Activated T-helper 1 cell treated with anti-CD3 and anti-CD28 coated beads, Interleukin-12 subunit alpha, Interleukin-12 subunit beta, Interleukin-2, Interleukin-4 antibody, amounts not matched to agents 30 ng/mL and 10 ng/mL and 1 ng/mL, durations not matched to agents 14 hours and 24 hours and 36 hours (primary cell): ENCODE measurements at regions of chr17 and their contacts with region 1.

Region 1: GRCh38 chr17:752002-752619 is at the start of gene GEMIN4:
- DNase-seq: peak; percentile 98
- H3K4me3 Mint-ChIP-seq: peak within 1 kb of the TSS; percentile 97
- H3K27ac Mint-ChIP-seq: peak within 1 kb of the TSS; percentile 95
- H3K4me1 Mint-ChIP-seq: peaks cover 34% of the 10 kb centered on the region
- H3K27me3 Mint-ChIP-seq: no peaks in the 10 kb centered on the region
- total RNA-seq, gene GEMIN4: 64.6 and 68.6 TPM in 2 replicates

Region 2: DNA sequence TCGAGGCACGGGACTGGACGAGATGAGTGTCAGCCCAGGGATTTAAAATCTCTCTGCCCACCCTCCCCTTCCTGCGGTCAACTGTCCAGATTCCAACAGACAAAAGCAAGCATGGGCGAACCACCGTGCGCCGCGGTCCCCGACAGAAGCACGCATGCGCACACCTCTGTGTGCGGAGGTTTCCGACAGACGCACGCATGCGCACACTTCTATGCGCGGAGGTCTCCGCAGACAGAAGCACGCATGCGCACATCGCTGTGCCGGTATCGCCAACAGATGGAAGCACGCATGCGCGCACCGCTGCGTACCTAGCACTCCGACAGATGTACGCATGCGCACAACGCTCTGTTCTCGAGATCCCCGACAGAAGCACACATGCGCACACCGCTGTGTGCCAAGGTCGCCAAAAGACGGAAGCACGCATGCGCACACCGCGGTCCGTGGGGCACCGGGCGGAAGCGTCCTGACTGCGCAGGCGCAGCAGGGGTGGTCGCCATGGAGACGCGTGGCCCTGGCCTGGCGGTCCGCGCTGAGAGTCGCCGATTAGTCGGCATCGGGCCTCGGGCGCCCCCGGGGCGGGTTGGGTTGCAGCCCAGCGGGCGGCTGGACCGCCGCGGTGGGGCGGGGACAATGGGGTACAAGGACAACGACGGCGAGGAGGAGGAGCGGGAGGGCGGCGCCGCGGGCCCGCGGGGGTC is 342.1 kb before region 1 on chr17:
- intact Hi-C with region 1: loop called (anchors 2 kb)
- DNase-seq: peak; percentile 99
- H3K4me3 Mint-ChIP-seq: peak overlapping the region; percentile 95
- H3K27ac Mint-ChIP-seq: peak overlapping the region; percentile 89
- H3K4me1 Mint-ChIP-seq: peaks cover 57% of the 10 kb centered on the region
- H3K27me3 Mint-ChIP-seq: peaks cover 7% of the 10 kb centered on the region

Region 3: GRCh38 chr17:732067-732901 is 19.8 kb before region 1 on chr17 and contains the start of gene TLCD3A:
- intact Hi-C with region 1: loop called (anchors 1 kb)
- DNase-seq: peak; percentile 61
- H3K4me3 Mint-ChIP-seq: peak within 1 kb of the TSS; percentile 90
- H3K27ac Mint-ChIP-seq: peak within 1 kb of the TSS; percentile 95
- H3K4me1 Mint-ChIP-seq: peaks cover 28% of the 10 kb centered on the region
- H3K27me3 Mint-ChIP-seq: peaks cover 6% of the 10 kb centered on the region
- total RNA-seq, gene TLCD3A: 36.3 and 36.8 TPM in 2 replicates

Region 4: DNA sequence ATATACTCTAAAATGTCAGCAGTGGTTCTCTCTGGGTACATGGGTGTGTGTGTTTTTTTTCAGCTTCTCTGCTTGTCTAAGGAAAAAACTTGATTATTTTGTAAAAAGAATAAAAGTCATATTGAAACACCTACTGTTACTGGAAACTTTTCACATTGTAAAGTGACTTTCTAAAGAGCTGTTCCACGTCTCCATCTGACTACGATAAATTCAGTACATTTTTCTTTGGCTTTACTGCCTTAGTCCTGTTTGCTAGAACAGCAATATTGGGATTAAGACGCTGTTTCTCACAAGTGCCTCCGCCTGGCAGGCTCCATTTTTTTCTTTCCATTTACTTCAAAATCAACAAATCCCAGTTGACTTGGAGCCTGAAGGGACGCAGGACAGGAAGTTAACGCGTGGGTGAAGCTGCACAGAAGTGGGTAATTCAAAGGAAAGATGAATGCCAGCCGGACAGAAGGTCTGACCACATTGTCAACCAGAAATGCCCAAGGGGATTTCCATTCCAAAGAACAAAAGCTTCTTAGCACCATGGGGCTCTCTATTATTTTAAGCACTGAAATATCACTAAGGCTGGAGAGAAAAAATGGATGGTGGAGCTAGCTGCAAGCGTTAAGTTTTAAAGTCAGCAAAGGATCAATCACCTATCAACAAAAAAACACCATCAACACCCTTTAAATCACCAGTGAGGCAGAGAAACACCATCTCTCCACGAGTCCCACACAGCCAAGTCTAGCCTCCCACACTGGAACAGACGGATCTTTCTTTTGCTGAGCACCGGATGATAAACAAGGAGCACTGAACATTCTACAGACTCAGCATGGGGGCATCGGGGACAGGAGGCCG is 21.6 kb after region 1 on chr17:
- intact Hi-C with region 1: loop called (anchors 2 kb)
- DNase-seq: no peak
- H3K4me3 Mint-ChIP-seq: peak overlapping the region; percentile 52
- H3K27ac Mint-ChIP-seq: peak overlapping the region; percentile 92
- H3K4me1 Mint-ChIP-seq: peaks cover 25% of the 10 kb centered on the region
- H3K27me3 Mint-ChIP-seq: no peaks in the 10 kb centered on the region

Region 5: GRCh38 chr17:794876-795275 is 42.8 kb after region 1 on chr17:
- intact Hi-C with region 1: no loop called
- DNase-seq: peak; percentile 5
- H3K4me3 Mint-ChIP-seq: no peak overlapping the region
- H3K27ac Mint-ChIP-seq: no peak overlapping the region
- H3K4me1 Mint-ChIP-seq: peaks cover 6% of the 10 kb centered on the region
- H3K27me3 Mint-ChIP-seq: no peaks in the 10 kb centered on the region

Region 6: DNA sequence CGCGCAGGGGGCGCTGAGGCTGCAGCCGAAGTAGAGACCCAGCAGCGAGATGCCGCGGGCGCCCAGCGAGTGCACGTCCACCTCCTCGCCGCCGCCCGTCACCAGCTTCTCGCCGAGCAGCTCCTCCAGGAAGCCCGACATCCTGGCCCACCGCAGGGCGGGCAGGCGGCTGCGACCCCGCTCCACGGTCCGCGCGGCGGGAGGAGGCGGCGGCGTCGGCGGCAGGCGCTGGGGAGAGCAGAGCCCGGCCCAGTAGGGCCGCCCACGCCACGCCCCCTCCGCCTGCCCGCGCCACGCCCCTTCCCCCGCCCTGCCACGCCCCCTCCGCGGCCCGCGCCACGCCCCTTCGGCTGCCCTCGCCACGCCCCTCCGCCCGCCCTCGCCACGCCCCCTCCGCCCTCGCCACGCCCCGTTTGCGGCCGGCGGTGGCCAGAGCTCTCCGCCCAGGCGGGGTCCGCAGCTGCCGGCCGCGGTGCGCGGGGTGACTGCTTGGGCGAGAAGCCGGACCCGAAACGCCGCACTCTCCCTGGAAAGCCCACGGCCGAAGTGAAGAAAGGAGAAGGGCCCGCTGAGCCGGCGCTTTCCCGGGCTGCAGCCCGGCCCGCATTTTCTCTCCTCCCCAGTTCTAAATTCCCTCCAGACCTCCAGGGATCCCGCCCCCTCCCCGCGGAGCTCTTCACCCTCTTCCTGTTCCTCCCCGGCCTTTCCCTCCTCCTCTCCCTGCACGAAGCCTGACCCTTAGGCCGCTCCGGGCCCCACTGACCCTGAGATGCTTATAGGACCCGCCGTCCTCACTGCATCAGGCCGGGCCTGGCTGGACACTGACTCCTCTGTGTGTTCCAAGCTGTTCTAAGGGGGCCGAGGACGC is 227.7 kb after region 1 on chr17 and contains the start of gene NXN:
- intact Hi-C with region 1: loop called (anchors 1 kb)
- DNase-seq: peak; percentile 81
- H3K4me3 Mint-ChIP-seq: peak within 1 kb of the TSS; percentile 78
- H3K27ac Mint-ChIP-seq: peak within 1 kb of the TSS; percentile 55
- H3K4me1 Mint-ChIP-seq: peaks cover 14% of the 10 kb centered on the region
- H3K27me3 Mint-ChIP-seq: peaks cover 33% of the 10 kb centered on the region
- total RNA-seq, gene NXN: 0.24 and 0.31 TPM in 2 replicates